ENCODE measurements at regions of chr15 and their contacts with region 1.

Region 1: GRCh38 chr15:74768771-74769342 is 13.0 kb upstream of the CSK start:
- DNase-seq: peak; percentile 72
- H3K4me3 ChIP-seq: peak overlapping the region; percentile 38; the same call in 1 of the 2 replicates
- H3K27ac ChIP-seq: no peak overlapping the region
- H3K4me1 ChIP-seq: 0 out of 2 replicates have a peak, but pooled peaks cover 5% of the 10 kb centered on the region
- H3K27me3 ChIP-seq: no peaks in the 10 kb centered on the region

Region 2: GRCh38 chr15:74373731-74374647 is 394.9 kb before region 1 on chr15:
- in situ Hi-C with region 1: loop called (anchors 10 kb)
- DNase-seq: peak; percentile 94
- H3K4me3 ChIP-seq: peak overlapping the region; percentile 77
- H3K27ac ChIP-seq: no peak overlapping the region
- H3K4me1 ChIP-seq: 0 out of 2 replicates have a peak, but pooled peaks cover 3% of the 10 kb centered on the region
- H3K27me3 ChIP-seq: no peaks in the 10 kb centered on the region

Region 3: DNA sequence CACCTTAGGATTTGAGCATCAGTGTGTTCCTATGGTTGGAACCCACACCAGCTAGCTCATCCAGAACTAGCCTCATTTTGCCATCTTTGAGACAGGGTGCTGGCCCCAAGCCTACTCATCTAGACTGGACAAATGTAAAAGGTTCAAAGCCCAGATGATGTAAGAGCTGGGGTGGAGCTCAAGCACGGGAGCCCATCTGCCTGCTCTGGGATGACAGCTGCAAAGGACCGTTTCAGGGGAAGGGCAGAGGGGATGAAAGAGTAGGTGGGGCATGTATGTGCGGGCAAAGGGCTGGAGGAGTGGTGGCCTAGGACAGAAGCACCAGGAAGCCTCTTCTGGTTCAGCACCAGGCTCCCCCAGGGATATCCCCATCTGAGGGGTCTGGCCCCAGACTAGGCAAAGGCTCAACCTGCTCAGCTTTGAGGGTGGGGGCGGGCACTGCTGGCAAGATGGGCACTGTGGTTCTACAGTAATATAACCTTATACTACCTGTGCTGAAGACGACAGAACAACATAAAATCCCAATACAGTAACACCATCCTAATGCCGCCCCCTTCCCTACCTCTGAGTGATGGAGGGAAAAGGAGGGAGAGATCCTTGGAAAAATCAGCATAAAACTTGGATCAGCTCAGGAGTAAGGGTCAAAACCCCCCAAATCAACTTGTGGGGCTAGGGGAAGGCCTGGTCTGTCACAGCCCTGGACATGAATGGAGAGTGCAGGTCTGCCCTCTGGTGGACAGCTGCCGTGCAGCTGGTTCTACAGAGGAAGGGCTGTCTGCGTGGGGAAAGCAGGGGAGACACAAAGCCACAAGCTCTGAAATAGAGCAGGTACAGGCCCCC is 137.2 kb before region 1 on chr15:
- in situ Hi-C with region 1: loop called (anchors 5 kb)
- DNase-seq: peak; percentile 71
- H3K4me3 ChIP-seq: no peak overlapping the region
- H3K27ac ChIP-seq: no peak overlapping the region
- H3K4me1 ChIP-seq: no peaks in the 10 kb centered on the region
- H3K27me3 ChIP-seq: no peaks in the 10 kb centered on the region

Region 4: GRCh38 chr15:74709011-74709410 is 59.8 kb before region 1 on chr15:
- in situ Hi-C with region 1: loop called (anchors 10 kb)
- DNase-seq: peak; percentile 45
- H3K4me3 ChIP-seq: no peak overlapping the region
- H3K27ac ChIP-seq: no peak overlapping the region
- H3K4me1 ChIP-seq: no peaks in the 10 kb centered on the region
- H3K27me3 ChIP-seq: peaks cover 9% of the 10 kb centered on the region

Region 5: DNA sequence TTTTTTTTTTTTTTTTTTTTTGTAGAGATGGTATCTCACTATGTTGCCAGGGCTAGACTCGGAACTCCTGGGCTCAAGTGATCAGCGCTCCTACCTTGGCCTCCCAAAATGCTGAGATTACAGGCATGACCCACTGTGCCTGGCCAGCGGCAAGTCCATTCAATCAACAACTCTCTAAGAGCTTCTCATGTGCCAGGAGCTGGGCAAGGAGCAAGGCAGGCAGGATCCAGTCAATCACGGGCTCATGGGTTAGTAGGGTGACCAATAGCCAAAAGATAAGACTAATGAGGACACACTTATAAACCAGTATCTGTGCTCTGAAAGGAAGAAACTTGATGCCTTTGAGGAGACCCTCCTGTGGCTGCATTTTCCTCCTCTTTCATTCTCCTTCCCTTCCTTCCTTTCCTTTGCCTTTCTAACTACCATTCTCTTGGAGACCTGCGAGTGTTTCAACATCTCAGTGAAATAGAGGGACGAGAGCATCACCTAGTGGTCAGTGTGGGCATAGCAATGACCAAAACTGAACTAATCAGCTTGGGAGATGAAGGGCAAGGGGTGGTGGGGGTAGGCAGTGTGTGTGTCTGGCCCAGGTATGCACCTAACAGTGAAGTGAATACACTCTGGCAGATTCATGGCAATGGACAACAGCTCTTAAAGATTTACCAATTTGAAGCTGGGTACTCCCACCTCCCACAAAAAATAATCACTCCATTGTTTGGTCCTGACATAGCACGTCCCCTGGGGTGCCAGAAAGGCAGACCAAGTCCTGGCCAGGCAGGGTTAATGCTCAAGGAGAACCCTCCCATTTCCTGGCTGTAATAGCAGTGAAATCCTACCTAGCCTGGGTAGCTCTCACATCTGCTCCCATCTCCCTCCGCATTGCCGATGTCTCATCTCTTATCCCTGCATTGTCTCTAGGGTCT is 181.5 kb after region 1 on chr15:
- in situ Hi-C with region 1: loop called (anchors 5 kb)
- DNase-seq: peak; percentile 74
- H3K4me3 ChIP-seq: no peak overlapping the region
- H3K27ac ChIP-seq: no peak overlapping the region
- H3K4me1 ChIP-seq: no peaks in the 10 kb centered on the region
- H3K27me3 ChIP-seq: no peaks in the 10 kb centered on the region